ENCODE measurements at regions of chr22 and their contacts with region 1.

Region 1: GRCh38 chr22:37166675-37167066 is 17.0 kb upstream of the IL2RB start:
- DNase-seq: peak; percentile 88
- CTCF ChIP-seq: peak; percentile 86

Region 2: DNA sequence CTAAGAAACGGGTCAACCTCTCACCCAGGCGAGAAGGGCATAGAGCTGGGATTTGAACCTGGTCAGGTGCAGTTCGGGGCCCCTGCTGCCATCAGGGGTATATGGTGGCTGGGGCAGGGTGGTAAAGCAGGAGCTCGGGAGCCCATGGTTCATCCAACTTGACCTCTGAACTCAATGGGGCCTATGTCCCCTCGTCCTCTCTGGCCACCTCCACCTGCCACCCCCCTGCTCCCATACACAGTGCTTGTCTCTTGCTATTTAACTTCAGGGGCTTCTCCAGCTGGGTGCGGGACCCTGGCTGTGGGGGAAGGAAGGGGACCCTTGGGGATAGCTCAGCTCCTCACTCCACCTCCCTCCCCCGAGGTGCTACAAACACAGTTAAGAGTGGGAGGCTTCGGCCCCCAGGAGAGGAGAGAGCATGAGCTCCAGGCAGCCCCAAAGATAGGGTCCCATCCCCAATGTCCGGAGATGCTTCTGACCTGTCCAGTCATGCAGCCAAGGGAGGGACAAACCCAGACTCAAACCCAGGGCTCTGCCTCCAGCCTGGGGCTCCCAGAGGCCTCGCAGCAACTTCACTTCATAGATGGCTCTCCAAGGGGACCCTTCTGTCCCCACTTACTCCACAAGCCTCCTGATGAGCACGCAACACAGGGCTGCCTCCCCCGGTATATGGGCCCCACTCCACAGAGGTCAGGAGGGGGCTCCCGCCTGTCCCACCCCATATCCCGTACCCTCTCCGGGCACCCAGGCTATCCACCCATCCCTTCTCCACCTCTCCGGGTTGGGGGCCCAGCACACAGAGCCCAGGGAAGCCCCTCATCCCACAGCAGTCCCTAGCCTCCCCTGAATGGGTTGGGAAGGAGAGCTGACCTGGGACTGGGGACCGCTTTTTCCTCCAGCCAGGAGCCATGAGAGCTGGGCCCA is 17.7 kb before region 1 on chr22:
- CTCF ChIA-PET with region 1: interaction called, 53 read pairs
- POLR2A ChIA-PET with region 1: interaction called, 16 read pairs
- DNase-seq: no peak
- CTCF ChIP-seq: no peak

Region 3: DNA sequence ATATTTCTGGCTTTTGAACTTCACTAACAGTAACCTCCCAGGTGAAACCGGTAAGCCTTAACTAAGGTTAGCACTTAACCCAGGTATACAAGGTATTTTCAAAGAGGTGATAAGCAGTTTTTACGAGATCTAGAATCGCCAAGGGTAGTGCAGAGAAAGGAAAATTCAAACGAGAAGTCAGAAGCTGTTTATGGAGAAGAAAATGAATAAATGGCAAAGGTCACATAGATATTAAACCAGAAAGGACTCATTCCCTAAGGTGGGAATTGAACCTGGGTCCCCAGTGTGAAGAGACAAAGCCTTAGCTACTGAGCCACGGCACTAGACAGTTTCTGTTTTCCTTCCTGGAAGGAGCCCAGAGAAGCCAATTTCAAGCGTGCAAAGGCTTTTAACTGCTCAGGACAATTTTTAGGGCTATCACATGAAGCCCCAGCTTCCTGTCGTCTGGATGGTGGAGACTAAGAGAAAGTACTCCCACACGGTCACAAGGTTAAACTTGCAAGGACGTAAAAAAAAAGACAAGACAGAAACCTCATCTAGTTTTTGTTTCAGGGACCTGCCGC is 27.0 kb after region 1 on chr22:
- CTCF ChIA-PET with region 1: interaction called, 83 read pairs
- POLR2A ChIA-PET with region 1: interaction called, 4 read pairs
- DNase-seq: no peak
- CTCF ChIP-seq: no peak